ENCODE measurements at regions of chr1 and their contacts with region 1.

Region 1: DNA sequence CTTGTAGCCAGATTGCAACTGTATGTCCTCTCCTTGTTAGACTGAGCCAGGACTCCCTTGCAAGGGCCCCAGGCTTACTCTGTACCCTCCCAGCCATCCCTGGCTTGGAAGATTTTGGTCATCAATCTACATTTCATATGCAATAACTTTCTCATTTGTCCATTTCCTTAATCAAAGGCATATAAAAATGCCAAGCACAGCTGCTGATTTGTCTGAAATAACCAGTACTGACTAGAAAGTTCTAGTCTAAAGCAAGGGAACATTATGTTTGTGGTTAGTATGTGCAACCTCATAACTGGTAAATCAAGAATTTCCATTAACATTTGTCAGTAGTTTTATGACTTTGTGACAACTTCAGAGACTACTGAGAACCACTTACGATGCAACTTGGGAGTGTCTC is 370.2 kb downstream of the ST6GALNAC3 start:
- DNase-seq: no peak
- H3K4me3 Mint-ChIP-seq: no peak overlapping the region
- H3K27ac Mint-ChIP-seq: no peak overlapping the region
- H3K4me1 Mint-ChIP-seq: peaks cover 29% of the 10 kb centered on the region
- H3K27me3 Mint-ChIP-seq: no peaks in the 10 kb centered on the region

Region 2: DNA sequence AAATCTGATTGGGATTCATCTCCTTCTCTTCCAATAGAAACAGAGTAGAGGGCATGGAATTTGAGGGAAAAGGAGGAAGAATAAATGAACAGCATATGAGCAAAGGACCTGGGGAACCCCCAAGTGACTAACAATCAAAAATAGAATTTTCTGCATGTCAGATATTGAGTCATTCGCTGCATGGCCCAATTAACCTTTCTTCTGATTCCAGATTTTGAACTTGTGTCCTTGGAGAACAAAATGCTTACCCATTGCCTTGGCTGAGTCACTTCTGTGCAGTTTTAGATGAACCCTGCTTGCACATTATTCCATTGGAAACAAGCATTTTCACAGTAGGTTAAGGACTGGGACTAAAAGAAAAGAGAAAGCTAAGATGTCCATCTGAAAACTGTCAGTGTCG is 20.3 kb after region 1 on chr1:
- CTCF ChIA-PET with region 1: no interaction called
- intact Hi-C with region 1: loop called (anchors 2 kb)
- DNase-seq: peak; percentile 26
- H3K4me3 Mint-ChIP-seq: no peak overlapping the region
- H3K27ac Mint-ChIP-seq: no peak overlapping the region
- H3K4me1 Mint-ChIP-seq: peaks cover 13% of the 10 kb centered on the region
- H3K27me3 Mint-ChIP-seq: no peaks in the 10 kb centered on the region

Region 3: GRCh38 chr1:76494807-76495206 is 50.0 kb after region 1 on chr1:
- CTCF ChIA-PET with region 1: no interaction called
- intact Hi-C with region 1: loop called (anchors 2 kb)
- DNase-seq: peak; percentile 60
- H3K4me3 Mint-ChIP-seq: no peak overlapping the region
- H3K27ac Mint-ChIP-seq: peak overlapping the region; percentile 67
- H3K4me1 Mint-ChIP-seq: peaks cover 17% of the 10 kb centered on the region
- H3K27me3 Mint-ChIP-seq: no peaks in the 10 kb centered on the region

Region 4: DNA sequence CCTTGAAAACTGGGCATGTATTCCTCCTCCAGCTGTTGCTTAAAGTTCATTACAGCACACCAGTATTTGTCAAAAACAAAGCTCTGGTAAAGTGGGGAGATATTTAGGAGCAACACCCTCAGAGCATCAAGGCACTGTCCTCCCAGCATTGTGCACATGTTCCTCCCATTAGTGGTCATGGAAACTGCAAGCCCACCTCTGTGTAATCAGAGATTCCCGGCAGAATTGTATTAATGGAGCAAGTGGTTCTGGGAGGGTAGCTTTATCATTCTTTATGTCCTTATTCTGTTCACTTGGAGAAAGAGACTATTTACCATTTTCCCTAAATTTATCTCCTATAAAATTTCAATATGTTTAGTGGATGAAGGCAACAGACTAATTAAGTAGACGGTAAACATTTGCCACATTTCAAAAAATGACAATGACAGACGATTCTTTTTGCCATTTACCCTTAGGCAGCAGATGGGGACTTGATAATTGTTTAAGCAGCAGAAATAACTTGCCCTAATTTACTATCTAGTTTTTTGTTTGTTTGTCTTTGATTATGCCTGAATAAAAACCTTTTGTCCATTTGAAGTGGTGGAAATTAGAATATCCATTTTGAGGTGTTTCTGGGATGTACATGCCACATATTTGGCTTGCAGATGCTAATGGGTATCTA is 132.9 kb after region 1 on chr1:
- CTCF ChIA-PET with region 1: no interaction called
- intact Hi-C with region 1: no loop called
- DNase-seq: no peak
- H3K4me3 Mint-ChIP-seq: no peak overlapping the region
- H3K27ac Mint-ChIP-seq: no peak overlapping the region
- H3K4me1 Mint-ChIP-seq: no peaks in the 10 kb centered on the region
- H3K27me3 Mint-ChIP-seq: no peaks in the 10 kb centered on the region

Region 5: DNA sequence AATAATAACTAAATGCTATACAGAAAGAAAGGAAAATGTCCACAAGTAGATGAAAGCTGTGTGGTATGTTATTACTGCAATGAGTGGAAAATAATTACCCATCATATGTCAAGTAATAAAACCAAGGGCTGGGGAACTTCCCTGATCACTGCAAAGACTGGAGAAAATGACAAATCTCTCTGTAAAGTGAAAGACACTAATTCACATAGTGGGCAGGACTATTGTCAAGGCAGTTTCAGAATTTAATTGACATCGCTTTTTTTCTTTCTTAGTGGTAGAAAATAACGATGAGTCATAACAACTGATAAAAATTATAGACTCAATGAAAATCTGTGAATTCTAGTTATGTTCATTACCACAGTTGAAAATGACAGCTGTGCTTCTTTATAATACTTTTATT is 268.8 kb after region 1 on chr1:
- CTCF ChIA-PET with region 1: no interaction called
- intact Hi-C with region 1: loop called (anchors 2 kb)
- DNase-seq: peak; percentile 9
- H3K4me3 Mint-ChIP-seq: no peak overlapping the region
- H3K27ac Mint-ChIP-seq: no peak overlapping the region
- H3K4me1 Mint-ChIP-seq: peaks cover 7% of the 10 kb centered on the region
- H3K27me3 Mint-ChIP-seq: peaks cover 9% of the 10 kb centered on the region